Calu3 (cell line): ENCODE measurements at regions of chr6 and their contacts with region 1.

Region 1: GRCh38 chr6:47413752-47414422 is 63.7 kb upstream of the CD2AP start:
- DNase-seq: no peak
- H3K4me3 Mint-ChIP-seq: peak overlapping the region; percentile 37
- H3K27ac Mint-ChIP-seq: peak overlapping the region; percentile 81
- H3K4me1 Mint-ChIP-seq: peaks cover 50% of the 10 kb centered on the region
- H3K27me3 Mint-ChIP-seq: no peaks in the 10 kb centered on the region
- CTCF ChIP-seq: peak; percentile 74

Region 2: DNA sequence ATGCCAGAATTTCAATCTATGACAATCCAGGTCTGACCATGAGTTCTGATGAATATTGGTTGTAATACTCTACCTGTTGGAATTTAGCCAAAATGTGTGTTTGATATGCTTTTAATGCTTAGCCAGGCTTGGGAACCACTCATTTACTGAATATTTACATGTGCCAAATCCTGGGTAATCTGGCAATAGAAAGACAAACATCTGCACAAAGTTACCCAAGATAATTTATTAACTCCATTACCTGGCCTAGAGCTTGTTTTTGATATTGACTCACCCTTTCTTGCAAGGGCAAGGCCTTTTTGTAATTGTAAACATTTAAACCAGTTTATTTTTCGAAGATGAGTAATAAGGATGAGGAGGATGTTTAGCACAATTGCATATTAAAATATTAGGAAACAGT is 50.2 kb after region 1 on chr6:
- CTCF ChIA-PET with region 1: interaction called, 6 read pairs
- intact Hi-C with region 1: loop called (anchors 1 kb)
- DNase-seq: no peak
- H3K4me3 Mint-ChIP-seq: no peak overlapping the region
- H3K27ac Mint-ChIP-seq: peak overlapping the region; percentile 69
- H3K4me1 Mint-ChIP-seq: peaks cover 44% of the 10 kb centered on the region
- H3K27me3 Mint-ChIP-seq: no peaks in the 10 kb centered on the region
- CTCF ChIP-seq: no peak

Region 3: GRCh38 chr6:47477497-47478232 is 63.8 kb after region 1 on chr6 and contains the start of gene CD2AP:
- CTCF ChIA-PET with region 1: interaction called, 14 read pairs
- intact Hi-C with region 1: loop called (anchors 2 kb)
- DNase-seq: peak; percentile 96
- H3K4me3 Mint-ChIP-seq: peak within 1 kb of the TSS; percentile 86
- H3K27ac Mint-ChIP-seq: peak within 1 kb of the TSS; percentile 94
- H3K4me1 Mint-ChIP-seq: peaks cover 42% of the 10 kb centered on the region
- H3K27me3 Mint-ChIP-seq: no peaks in the 10 kb centered on the region
- CTCF ChIP-seq: no peak
- total RNA-seq, gene CD2AP: 105 and 121 TPM in 2 replicates

Region 4: DNA sequence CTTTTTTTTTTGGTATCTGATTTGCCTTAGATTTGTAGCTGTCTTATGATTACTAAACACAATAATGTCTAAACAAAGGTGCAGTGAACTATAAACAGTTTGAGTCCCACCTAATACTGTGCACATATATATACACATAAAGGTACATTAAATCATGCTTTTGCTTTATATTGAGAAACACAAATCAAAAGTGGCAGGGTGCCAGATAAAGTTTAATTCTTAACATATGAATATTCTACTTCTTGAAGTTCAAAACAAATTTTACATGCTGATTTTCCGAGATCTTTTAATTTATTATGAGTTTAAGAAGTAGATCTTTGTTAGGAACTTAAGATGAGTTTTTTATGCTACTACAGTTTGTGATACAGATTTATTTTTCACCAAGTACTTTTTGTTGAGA is 191.6 kb after region 1 on chr6:
- CTCF ChIA-PET with region 1: no interaction called
- intact Hi-C with region 1: loop called (anchors 5 kb)
- DNase-seq: no peak
- H3K4me3 Mint-ChIP-seq: no peak overlapping the region
- H3K27ac Mint-ChIP-seq: peak overlapping the region; percentile 53
- H3K4me1 Mint-ChIP-seq: peaks cover 8% of the 10 kb centered on the region
- H3K27me3 Mint-ChIP-seq: no peaks in the 10 kb centered on the region
- CTCF ChIP-seq: no peak

Region 5: DNA sequence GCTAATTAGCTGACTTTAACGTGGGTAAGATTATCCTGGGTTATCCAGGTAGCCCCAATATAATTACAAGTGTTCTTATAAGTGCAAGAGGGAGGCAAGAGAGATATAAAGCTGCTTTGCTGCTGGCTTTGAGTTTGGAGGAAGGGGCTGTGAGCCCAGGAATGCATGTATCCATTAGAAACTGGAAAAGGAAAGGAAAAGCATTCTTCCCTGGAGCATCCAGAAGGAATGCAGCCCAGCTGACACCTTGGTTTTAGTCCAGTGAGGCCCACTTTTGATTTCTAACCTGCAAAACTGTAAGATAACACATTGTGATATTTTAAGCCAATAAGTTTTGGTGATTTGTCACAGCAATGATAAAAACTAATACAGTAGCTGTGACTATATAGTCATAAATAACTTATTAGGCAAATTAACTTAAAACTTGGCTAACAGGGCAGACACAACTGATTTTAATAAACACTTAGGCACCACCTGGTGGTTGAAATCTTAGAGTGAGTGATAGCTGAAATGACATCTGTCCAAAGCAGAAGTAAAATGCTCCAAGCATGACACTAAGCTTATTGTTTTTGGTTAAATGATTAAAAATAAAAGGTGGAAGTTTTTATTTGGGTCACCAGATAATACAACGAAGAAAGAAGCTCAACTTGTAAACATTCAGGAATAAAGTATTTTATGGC is 320.1 kb after region 1 on chr6:
- CTCF ChIA-PET with region 1: no interaction called
- intact Hi-C with region 1: loop called (anchors 2 kb)
- DNase-seq: peak; percentile 48
- H3K4me3 Mint-ChIP-seq: no peak overlapping the region
- H3K27ac Mint-ChIP-seq: no peak overlapping the region
- H3K4me1 Mint-ChIP-seq: peaks cover 45% of the 10 kb centered on the region
- H3K27me3 Mint-ChIP-seq: no peaks in the 10 kb centered on the region
- CTCF ChIP-seq: peak; percentile 54

Region 6: DNA sequence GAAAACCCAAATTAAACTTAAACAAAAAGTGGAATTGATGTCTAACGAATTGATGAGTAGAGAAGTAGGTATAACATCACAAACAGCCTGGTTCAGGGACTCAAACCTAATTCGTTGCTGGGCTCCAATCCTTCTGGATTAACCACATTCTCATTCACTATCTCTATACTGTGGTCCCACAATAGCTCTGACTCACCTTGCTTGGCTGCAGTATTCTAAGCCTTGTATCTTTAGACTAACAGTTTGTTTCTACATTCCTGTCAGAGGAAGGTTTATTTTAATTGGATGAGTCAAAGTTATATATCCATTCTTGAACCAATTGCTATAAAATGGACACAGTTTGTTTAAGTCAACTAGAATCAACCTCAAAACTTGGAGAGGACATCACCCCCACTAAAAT is 1227.7 kb after region 1 on chr6:
- CTCF ChIA-PET with region 1: no interaction called
- intact Hi-C with region 1: no loop called
- DNase-seq: no peak
- H3K4me3 Mint-ChIP-seq: no peak overlapping the region
- H3K27ac Mint-ChIP-seq: no peak overlapping the region
- H3K4me1 Mint-ChIP-seq: no peaks in the 10 kb centered on the region
- H3K27me3 Mint-ChIP-seq: no peaks in the 10 kb centered on the region
- CTCF ChIP-seq: no peak